Activated CD4-positive, alpha-beta memory T cell treated with anti-CD3 and anti-CD28 coated beads for 36 hours (primary cell): ENCODE measurements at regions of chr1 and their contacts with region 1.

Region 1: DNA sequence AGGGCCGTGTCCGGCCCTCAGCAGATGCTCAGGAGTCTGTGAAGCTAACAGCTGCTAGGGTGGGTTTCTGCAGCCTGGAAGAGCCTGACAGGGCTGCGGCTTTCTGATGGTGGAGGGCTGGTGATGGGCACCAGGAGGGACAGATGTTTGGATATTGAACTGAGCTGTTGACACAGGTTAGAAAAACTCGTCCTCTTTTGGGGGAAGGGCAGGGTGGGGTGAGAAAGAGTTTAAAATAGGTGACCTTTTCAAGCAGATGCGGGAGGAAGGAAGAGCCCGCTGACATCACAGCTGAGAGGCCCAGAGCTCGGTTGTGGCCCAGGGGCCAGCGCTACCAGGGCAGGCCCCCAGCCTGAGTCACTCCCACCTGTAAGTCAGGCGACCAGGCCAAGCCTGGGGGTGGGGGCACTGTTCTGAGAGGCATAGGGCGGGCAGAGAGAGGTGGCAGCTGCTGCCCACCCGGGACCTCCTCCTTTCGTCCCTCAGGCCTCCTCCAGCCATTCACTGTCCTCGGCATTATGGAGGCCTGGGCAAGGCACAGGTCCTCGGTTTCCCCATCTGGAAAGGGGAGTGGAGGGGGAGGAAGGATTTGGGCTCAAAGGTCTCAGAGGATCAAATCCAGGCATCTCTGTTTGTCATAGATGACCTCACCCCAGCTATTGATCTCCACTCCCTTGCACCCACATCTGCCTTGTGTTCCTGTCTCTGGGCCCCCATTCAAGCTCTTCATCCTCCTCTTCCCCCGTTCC is 32.3 kb upstream of the ID3 start:
- DNase-seq: peak; percentile 82
- H3K4me3 Mint-ChIP-seq: peak overlapping the region; percentile 13
- H3K27ac Mint-ChIP-seq: peak overlapping the region; percentile 79
- H3K4me1 Mint-ChIP-seq: peaks cover 53% of the 10 kb centered on the region
- H3K27me3 Mint-ChIP-seq: no peaks in the 10 kb centered on the region

Region 2: GRCh38 chr1:23577056-23578004 is 14.3 kb before region 1 on chr1:
- CTCF ChIA-PET with region 1: interaction called, 4 read pairs
- POLR2A ChIA-PET with region 1: interaction called, 4 read pairs
- intact Hi-C with region 1: loop called (anchors 1 kb)
- DNase-seq: peak; percentile 71
- H3K4me3 Mint-ChIP-seq: peak overlapping the region; percentile 4
- H3K27ac Mint-ChIP-seq: peak overlapping the region; percentile 55
- H3K4me1 Mint-ChIP-seq: peaks cover 27% of the 10 kb centered on the region
- H3K27me3 Mint-ChIP-seq: no peaks in the 10 kb centered on the region

Region 3: DNA sequence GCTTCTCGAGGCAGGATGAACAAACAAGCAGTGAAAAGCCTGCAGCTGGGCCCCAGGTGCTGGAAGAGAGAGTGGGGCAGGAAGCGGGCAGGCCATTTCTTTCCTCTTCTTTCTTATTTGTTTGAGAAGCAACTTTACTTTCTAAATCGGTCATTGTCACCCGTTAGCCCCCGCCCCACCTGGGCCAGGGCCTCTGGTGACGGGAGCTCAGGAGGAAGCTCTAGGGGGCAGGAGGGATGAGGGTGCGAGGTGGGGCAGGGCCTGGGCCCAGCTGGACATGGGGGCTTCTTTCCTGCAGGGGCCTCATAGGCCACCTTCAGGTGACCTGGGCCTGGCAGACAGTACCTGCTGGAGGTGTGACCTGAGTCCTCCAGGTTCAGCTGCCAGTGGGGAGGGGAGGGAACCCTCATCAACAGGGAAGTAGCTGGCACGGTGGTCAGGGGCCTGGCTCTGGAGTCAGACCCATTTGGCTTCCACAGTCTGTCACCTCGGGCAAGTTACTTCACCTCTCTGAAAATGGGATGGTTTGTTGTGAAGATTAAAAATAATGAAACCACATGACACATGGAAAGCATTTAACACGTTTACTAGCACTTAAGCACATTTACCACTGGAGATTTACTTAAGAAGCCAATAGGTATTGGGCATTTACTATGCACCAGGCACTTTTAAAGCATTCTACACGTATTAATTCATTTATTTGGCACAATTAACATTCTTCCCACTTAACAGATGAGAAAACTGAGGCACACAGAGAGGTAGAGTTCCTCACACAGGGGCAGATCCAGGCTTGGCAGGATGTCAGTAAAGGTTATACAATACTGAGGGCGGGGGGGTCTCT is 21.8 kb after region 1 on chr1:
- CTCF ChIA-PET with region 1: no interaction called
- POLR2A ChIA-PET with region 1: interaction called, 3 read pairs
- intact Hi-C with region 1: loop called (anchors 1 kb)
- DNase-seq: peak; percentile 86
- H3K4me3 Mint-ChIP-seq: peak overlapping the region; percentile 17
- H3K27ac Mint-ChIP-seq: peak overlapping the region; percentile 77
- H3K4me1 Mint-ChIP-seq: peaks cover 72% of the 10 kb centered on the region
- H3K27me3 Mint-ChIP-seq: no peaks in the 10 kb centered on the region

Region 4: GRCh38 chr1:23619299-23620188 is 27.9 kb after region 1 on chr1:
- CTCF ChIA-PET with region 1: interaction called, 3 read pairs
- POLR2A ChIA-PET with region 1: no interaction called
- intact Hi-C with region 1: loop called (anchors 1 kb)
- DNase-seq: peak; percentile 90
- H3K4me3 Mint-ChIP-seq: peak overlapping the region; percentile 67
- H3K27ac Mint-ChIP-seq: peak overlapping the region; percentile 76
- H3K4me1 Mint-ChIP-seq: peaks cover 76% of the 10 kb centered on the region
- H3K27me3 Mint-ChIP-seq: no peaks in the 10 kb centered on the region